ENCODE measurements at regions of chr10 and their contacts with region 1.

Region 1: GRCh38 chr10:68901104-68901927 is at the start of gene DDX50:
- DNase-seq: peak; percentile 97 to 99
- H3K4me3 ChIP-seq: peak within 1 kb of the TSS; percentile 75
- H3K27ac ChIP-seq: peak within 1 kb of the TSS; percentile 80
- H3K4me1 ChIP-seq: peaks cover 18% of the 10 kb centered on the region
- H3K27me3 ChIP-seq: no peaks in the 10 kb centered on the region
- CTCF ChIP-seq: no peak; the same call in 1 of the 2 replicates
- total RNA-seq, gene DDX50: 33.8 and 37.7 TPM in 2 replicates

Region 2: DNA sequence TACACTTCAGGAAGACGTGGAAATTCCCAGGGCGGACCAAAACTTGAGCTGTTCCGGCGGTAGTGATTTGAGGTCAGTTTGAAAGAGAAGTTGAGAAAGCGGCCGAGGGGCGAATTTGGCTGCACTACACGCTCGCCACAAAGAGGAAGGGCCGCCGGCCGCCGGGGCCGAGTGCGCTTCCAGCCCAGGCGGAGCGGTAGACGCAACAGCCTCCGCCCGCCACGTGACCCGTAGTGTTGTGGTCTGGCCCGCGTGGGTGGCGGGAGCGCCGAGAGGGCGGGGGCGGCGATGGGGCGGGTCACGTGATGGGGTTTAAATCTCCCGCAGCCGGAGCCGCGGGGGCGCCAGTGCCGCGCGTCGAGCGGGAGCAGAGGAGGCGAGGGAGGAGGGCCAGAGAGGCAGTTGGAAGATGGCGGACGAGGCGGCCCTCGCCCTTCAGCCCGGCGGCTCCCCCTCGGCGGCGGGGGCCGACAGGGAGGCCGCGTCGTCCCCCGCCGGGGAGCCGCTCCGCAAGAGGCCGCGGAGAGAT is 1016.9 kb before region 1 on chr10 and contains the start of gene SIRT1:
- CTCF ChIA-PET with region 1: no interaction called
- POLR2A ChIA-PET with region 1: interaction called, 21 read pairs
- intact Hi-C with region 1: no loop called
- DNase-seq: peak; percentile 75 to 98
- H3K4me3 ChIP-seq: peak within 1 kb of the TSS; percentile 70
- H3K27ac ChIP-seq: peak within 1 kb of the TSS; percentile 63
- H3K4me1 ChIP-seq: peaks cover 17% of the 10 kb centered on the region
- H3K27me3 ChIP-seq: no peaks in the 10 kb centered on the region
- CTCF ChIP-seq: no peak
- total RNA-seq, gene SIRT1: 15.8 and 17.2 TPM in 2 replicates

Region 3: GRCh38 chr10:68208424-68209042 is 692.8 kb before region 1 on chr10:
- CTCF ChIA-PET with region 1: interaction called, 4 read pairs
- POLR2A ChIA-PET with region 1: interaction called, 3 read pairs
- intact Hi-C with region 1: loop called (anchors 2 kb)
- DNase-seq: peak; percentile 63 to 78
- H3K4me3 ChIP-seq: no peak overlapping the region
- H3K27ac ChIP-seq: no peak overlapping the region
- H3K4me1 ChIP-seq: peaks cover 7% of the 10 kb centered on the region
- H3K27me3 ChIP-seq: no peaks in the 10 kb centered on the region
- CTCF ChIP-seq: peak; percentile 82

Region 4: GRCh38 chr10:68406815-68407548 is 494.3 kb before region 1 on chr10 and contains the start of gene RUFY2:
- CTCF ChIA-PET with region 1: no interaction called
- POLR2A ChIA-PET with region 1: interaction called, 4 read pairs
- intact Hi-C with region 1: loop called (anchors 10 kb)
- DNase-seq: peak; percentile 45 to 88
- H3K4me3 ChIP-seq: peak within 1 kb of the TSS; percentile 66
- H3K27ac ChIP-seq: peak within 1 kb of the TSS; percentile 60
- H3K4me1 ChIP-seq: peaks cover 9% of the 10 kb centered on the region
- H3K27me3 ChIP-seq: no peaks in the 10 kb centered on the region
- CTCF ChIP-seq: peak; percentile 53
- total RNA-seq, gene RUFY2: 26.7 and 30.5 TPM in 2 replicates

Region 5: DNA sequence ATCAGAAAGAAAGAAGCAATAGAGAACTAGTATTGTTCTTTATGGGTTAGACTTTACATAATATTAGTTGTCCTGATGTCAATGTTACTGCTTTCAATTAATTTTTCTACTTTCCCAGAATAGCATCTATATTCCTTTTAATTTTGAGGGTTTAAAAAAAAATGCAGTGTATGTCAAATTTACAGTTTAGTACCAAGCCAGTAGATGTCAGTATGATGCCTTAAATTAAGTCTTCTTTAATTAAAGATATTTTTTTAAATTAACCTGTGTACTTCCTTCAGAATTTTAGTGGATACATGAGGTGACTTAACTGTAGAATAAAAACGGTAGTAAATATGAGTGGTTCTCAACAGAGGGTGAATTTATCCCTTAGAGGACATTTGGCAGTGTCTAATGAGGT is 109.2 kb before region 1 on chr10:
- CTCF ChIA-PET with region 1: no interaction called
- POLR2A ChIA-PET with region 1: no interaction called
- intact Hi-C with region 1: loop called (anchors 1 kb)
- DNase-seq: no peak
- H3K4me3 ChIP-seq: no peak overlapping the region
- H3K27ac ChIP-seq: no peak overlapping the region
- H3K4me1 ChIP-seq: no peaks in the 10 kb centered on the region
- H3K27me3 ChIP-seq: no peaks in the 10 kb centered on the region
- CTCF ChIP-seq: peak; percentile 73

Region 6: GRCh38 chr10:68800196-68800595 is 101.1 kb before region 1 on chr10:
- CTCF ChIA-PET with region 1: interaction called, 4 read pairs
- POLR2A ChIA-PET with region 1: no interaction called
- intact Hi-C with region 1: loop called (anchors 5 kb)
- DNase-seq: no peak
- H3K4me3 ChIP-seq: no peak overlapping the region
- H3K27ac ChIP-seq: no peak overlapping the region
- H3K4me1 ChIP-seq: 0 out of 2 replicates have a peak, but pooled peaks cover 4% of the 10 kb centered on the region
- H3K27me3 ChIP-seq: no peaks in the 10 kb centered on the region
- CTCF ChIP-seq: no peak

Region 7: GRCh38 chr10:68955832-68956532 is 54.7 kb after region 1 on chr10 and contains the start of gene DDX21:
- CTCF ChIA-PET with region 1: no interaction called
- POLR2A ChIA-PET with region 1: no interaction called
- intact Hi-C with region 1: loop called (anchors 1 kb)
- DNase-seq: peak; percentile 88 to 92
- H3K4me3 ChIP-seq: peak within 1 kb of the TSS; percentile 85
- H3K27ac ChIP-seq: peak within 1 kb of the TSS; percentile 86
- H3K4me1 ChIP-seq: peaks cover 29% of the 10 kb centered on the region
- H3K27me3 ChIP-seq: no peaks in the 10 kb centered on the region
- CTCF ChIP-seq: peak; percentile 81
- total RNA-seq, gene DDX21: 65.8 and 88.0 TPM in 2 replicates

Region 8: GRCh38 chr10:69014171-69014570 is 112.9 kb after region 1 on chr10:
- CTCF ChIA-PET with region 1: no interaction called
- POLR2A ChIA-PET with region 1: no interaction called
- intact Hi-C with region 1: no loop called
- DNase-seq: no peak
- H3K4me3 ChIP-seq: no peak overlapping the region
- H3K27ac ChIP-seq: no peak overlapping the region
- H3K4me1 ChIP-seq: no peaks in the 10 kb centered on the region
- H3K27me3 ChIP-seq: no peaks in the 10 kb centered on the region
- CTCF ChIP-seq: no peak

Measured in PC-9 (cell line).